ENCODE measurements at regions of chr6 and their contacts with region 1.

Region 1: DNA sequence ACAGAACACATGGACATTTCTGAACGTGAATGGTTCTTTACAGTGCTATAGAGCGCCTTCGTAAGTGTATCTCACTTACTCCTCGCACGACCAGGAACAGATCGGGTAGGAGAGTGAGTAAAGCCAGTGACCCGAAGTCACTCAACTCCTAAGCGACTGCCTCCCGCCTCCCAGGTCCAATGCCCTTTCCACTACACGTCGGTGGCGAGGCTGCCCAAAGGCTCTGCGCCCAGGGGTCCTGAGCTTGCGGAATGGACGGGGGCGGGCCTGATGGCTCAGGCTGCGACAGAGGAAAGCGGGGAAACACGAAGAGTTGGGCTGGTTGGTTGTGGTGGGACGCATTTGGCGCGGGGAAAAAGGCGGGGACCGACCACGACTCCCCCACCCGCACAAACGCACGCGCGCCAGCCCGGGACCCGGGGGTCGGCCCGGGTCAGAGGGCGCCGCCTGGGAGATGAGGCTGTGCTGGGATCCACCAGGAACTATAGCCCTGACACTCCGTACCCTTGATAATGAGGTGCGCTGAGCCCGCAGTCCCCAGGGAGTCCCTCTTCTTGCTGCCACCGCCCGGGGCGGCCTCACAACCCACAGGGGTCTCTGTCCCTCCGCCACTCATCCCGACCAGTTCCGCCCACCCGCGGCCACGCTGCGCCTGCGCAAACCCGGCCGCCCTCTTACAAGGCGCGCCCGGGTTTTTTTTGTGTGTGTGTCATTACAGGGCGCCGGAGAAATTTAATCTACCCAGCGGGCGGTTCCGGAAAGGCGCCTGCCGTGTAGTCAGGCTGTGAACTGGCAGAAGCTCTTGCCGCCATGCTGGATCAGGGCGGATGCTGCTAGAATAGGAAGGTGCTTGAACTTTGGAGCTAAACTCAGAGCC is at the start of gene BLOC1S5:
- DNase-seq: peak; percentile 96 to 97
- ATAC-seq: peak; percentile 99
- H3K4me3 ChIP-seq: peak within 1 kb of the TSS; percentile 96
- H3K27ac ChIP-seq: peak within 1 kb of the TSS; percentile 89
- H3K4me1 ChIP-seq: peaks cover 7% of the 10 kb centered on the region
- H3K27me3 ChIP-seq: no peaks in the 10 kb centered on the region
- CTCF ChIP-seq: no peak
- total RNA-seq, gene BLOC1S5: 6.2 to 13.0 (median 8.8) TPM

Region 2: GRCh38 chr6:7910654-7911344 is 153.2 kb before region 1 on chr6 and contains the start of gene TXNDC5:
- intact Hi-C with region 1: loop called (anchors 5 to 10 kb)
- DNase-seq: peak; percentile 84 to 88
- ATAC-seq: peak; percentile 87 to 92 (median 90)
- H3K4me3 ChIP-seq: peak within 1 kb of the TSS; percentile 78
- H3K27ac ChIP-seq: peak within 1 kb of the TSS; percentile 74
- H3K4me1 ChIP-seq: peaks cover 11% of the 10 kb centered on the region
- H3K27me3 ChIP-seq: no peaks in the 10 kb centered on the region
- CTCF ChIP-seq: no peak
- total RNA-seq, gene TXNDC5: 15.5 to 33.2 (median 23.4) TPM

Region 3: GRCh38 chr6:8102122-8102958 is 38.3 kb after region 1 on chr6 and contains the start of gene EEF1E1:
- intact Hi-C with region 1: loop called in 1 of 2 experiments (anchors 5 kb)
- DNase-seq: peak; percentile 91 to 95
- ATAC-seq: peak; percentile 100
- H3K4me3 ChIP-seq: peak within 1 kb of the TSS; percentile 98
- H3K27ac ChIP-seq: peak within 1 kb of the TSS; percentile 80
- H3K4me1 ChIP-seq: no peaks in the 10 kb centered on the region
- H3K27me3 ChIP-seq: peaks cover 0 to 11% (median 2%) of the 10 kb centered on the region in 3 donors
- CTCF ChIP-seq: no peak
- total RNA-seq, gene EEF1E1: 12.8 to 14.0 (median 13.5) TPM

Region 4: GRCh38 chr6:8123236-8123635 is 59.2 kb after region 1 on chr6:
- intact Hi-C with region 1: no loop called
- DNase-seq: no peak
- ATAC-seq: no peak
- H3K4me3 ChIP-seq: no peak overlapping the region
- H3K27ac ChIP-seq: no peak overlapping the region
- H3K4me1 ChIP-seq: no peaks in the 10 kb centered on the region
- H3K27me3 ChIP-seq: no peaks in the 10 kb centered on the region
- CTCF ChIP-seq: no peak

Measured in psoas muscle (tissue), 8 donors.